Left cardiac atrium (tissue), 4 donors: ENCODE measurements at regions of chr6 and their contacts with region 1.

Region 1: DNA sequence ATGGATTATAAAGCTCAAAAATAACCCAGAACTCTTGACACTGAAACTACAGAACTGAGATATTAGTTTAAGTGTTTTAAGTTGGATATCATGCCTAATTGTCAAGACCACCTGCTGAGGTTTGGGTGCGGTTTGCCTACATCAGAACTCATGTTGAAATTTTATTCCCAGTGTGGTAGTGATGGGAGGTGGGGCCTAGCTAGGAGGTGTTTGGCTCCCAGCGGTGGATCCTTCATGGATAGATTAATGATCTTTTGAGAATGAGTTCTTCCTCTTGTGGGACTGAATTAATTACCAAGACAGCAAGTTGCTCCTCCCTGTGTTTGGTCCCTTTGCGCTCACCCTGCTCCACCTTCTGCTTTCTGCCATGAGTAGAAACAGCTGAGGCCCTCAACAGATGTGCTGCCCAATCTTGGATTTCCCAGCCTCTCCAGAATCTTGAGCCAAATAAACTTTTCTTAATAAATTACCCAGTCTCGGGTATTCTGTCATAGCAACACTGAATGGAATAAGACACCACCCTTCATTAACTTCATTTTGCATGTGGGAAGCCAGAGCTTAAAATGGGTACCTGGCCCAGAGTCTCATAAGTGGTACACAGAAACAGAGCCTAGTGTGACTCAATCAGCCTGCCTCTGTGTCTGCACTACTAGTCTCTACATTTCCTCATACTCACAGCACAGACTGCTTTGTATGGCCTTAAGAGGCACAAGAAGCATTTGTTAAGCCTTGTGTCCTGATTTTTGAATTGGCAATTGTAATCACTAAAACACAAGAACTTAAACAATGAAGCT is 158.4 kb downstream of the IBTK start:
- DNase-seq: no peak
- ATAC-seq: no peak

Region 2: DNA sequence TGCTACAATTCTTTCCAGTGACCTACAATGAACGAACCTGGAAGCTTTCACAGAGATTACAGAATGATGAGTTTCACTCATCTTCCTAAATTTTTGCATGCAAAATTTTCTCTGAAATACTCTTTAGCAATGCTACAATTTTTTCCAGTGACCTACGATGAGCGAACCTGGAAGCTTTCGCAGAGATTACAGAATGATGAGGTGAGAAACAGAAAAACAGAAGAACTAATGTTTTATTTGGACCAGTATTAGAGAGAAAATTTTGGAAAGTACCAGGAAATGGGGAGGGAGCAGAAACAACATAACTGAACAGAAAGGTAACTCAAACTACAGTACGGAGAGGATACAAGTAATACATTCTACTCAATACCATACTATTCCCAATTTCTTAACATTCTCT is 83.4 kb after region 1 on chr6:
- intact Hi-C with region 1: loop called (anchors 5 to 10 kb)
- DNase-seq: no peak
- ATAC-seq: no peak